Ovary (tissue), 10 donors: ENCODE measurements at regions of chr10 and their contacts with region 1.

Region 1: DNA sequence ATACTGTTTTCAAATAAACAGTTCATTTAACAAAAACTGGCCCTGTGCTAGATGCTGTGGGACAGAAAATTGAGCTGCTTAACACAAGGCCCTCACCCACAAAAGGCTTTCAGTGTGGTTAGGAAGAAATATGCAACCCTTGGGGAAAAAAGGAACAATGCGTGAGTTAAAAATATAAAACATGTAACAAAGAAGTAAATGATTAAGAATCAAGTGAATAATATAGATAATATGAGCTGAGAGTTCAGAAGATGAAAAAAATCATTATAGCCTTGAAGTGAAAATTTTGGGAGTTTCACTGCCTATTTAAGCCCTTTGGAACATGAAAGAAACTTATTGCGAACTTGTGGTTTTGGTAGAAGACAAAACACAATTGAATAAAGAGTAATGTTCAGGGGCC is 495.4 kb downstream of the GFRA1 start:
- DNase-seq: no peak
- H3K4me3 ChIP-seq: no peak overlapping the region
- H3K27ac ChIP-seq: no peak overlapping the region
- H3K4me1 ChIP-seq: no peaks in the 10 kb centered on the region
- H3K27me3 ChIP-seq: no peaks in the 10 kb centered on the region
- CTCF ChIP-seq: no peak
- EP300 ChIP-seq: no peak
- POLR2A ChIP-seq: no peak

Region 2: DNA sequence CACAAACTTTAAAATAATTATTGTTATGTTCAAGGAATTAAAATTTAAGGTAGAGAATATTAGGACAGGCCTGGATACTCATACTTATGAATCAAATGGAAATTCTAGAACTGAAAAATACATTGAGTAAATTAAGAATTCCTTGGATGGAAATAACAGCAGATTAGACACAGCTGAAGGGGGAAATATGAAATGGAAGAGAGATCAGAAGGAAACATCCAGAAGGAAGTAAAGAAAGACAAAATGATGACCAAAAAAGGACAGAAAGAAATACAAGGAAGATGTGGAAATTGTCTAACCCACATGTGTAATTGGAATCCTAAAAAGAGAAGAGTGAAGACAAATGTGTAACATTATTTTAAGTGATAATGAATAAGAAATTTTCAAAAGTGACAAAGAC is 555.6 kb before region 1 on chr10:
- intact Hi-C with region 1: loop called in 1 of 4 experiments (anchors 5 kb)
- DNase-seq: no peak
- H3K4me3 ChIP-seq: no peak overlapping the region
- H3K27ac ChIP-seq: no peak overlapping the region
- H3K4me1 ChIP-seq: no peaks in the 10 kb centered on the region
- H3K27me3 ChIP-seq: no peaks in the 10 kb centered on the region
- CTCF ChIP-seq: no peak
- EP300 ChIP-seq: no peak
- POLR2A ChIP-seq: no peak